CD4-positive, alpha-beta memory T cell (primary cell): ENCODE measurements at regions of chr9 and their contacts with region 1.

Region 1: GRCh38 chr9:131739980-131740648 is at the start of gene RAPGEF1:
- DNase-seq: peak; percentile 66 to 89 (median 81)
- H3K4me3 ChIP-seq: peak within 1 kb of the TSS; percentile 31 to 67
- H3K4me3 Mint-ChIP-seq: peak within 1 kb of the TSS; percentile 92 to 98 (median 94)
- H3K27ac ChIP-seq: peak within 1 kb of the TSS; percentile 72
- H3K27ac Mint-ChIP-seq: peak within 1 kb of the TSS; percentile 91 to 98 (median 95)
- H3K4me1 ChIP-seq: peaks cover 68% of the 10 kb centered on the region
- H3K4me1 Mint-ChIP-seq: peaks cover 46 to 64% (median 55%) of the 10 kb centered on the region in 4 donors
- H3K27me3 ChIP-seq: no peaks in the 10 kb centered on the region
- H3K27me3 Mint-ChIP-seq: no peaks in the 10 kb centered on the region
- total RNA-seq, gene RAPGEF1: 129 to 149 TPM

Region 2: GRCh38 chr9:131253891-131254491 is 486.1 kb before region 1 on chr9:
- CTCF ChIA-PET with region 1: no interaction called
- POLR2A ChIA-PET with region 1: no interaction called
- intact Hi-C with region 1: loop called (anchors 10 kb)
- DNase-seq: no peak
- H3K4me3 ChIP-seq: no peak overlapping the region
- H3K4me3 Mint-ChIP-seq: peak overlapping the region in 7 of 8 donors; percentile 27 to 91 (median 46)
- H3K27ac ChIP-seq: peak overlapping the region; percentile 77
- H3K27ac Mint-ChIP-seq: peak overlapping the region; percentile 57 to 100 (median 72)
- H3K4me1 ChIP-seq: peaks cover 72% of the 10 kb centered on the region
- H3K4me1 Mint-ChIP-seq: peaks cover 27 to 73% (median 50%) of the 10 kb centered on the region in 4 donors
- H3K27me3 ChIP-seq: no peaks in the 10 kb centered on the region
- H3K27me3 Mint-ChIP-seq: no peaks in the 10 kb centered on the region

Region 3: DNA sequence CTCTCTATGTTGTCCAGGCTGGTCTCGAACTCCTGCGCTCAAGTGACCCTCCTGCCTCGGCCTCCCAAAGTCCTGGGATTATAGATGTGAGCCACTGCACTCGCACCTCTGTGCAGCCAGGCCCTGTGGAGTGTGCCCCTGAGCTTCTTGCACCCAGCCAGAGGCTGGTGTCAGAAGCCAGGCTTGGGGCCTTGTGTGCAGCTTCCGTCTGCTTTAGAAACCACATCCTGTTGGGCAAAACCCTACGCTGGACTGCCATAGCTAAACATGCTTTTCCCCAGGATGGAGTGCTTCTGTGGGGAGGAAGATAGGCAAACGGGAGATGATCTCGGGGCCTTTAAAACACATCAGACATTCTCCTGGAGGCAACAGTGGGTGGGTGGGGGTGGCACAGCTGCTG is 154.7 kb before region 1 on chr9:
- CTCF ChIA-PET with region 1: interaction called, 186 read pairs
- POLR2A ChIA-PET with region 1: interaction called, 26 read pairs
- intact Hi-C with region 1: no loop called
- DNase-seq: peak; percentile 56 to 77 (median 60)
- H3K4me3 ChIP-seq: no peak overlapping the region
- H3K4me3 Mint-ChIP-seq: peak overlapping the region; percentile 67 to 87 (median 78)
- H3K27ac ChIP-seq: peak overlapping the region; percentile 6
- H3K27ac Mint-ChIP-seq: peak overlapping the region; percentile 85 to 97 (median 92)
- H3K4me1 ChIP-seq: peaks cover 35% of the 10 kb centered on the region
- H3K4me1 Mint-ChIP-seq: peaks cover 24 to 57% (median 32%) of the 10 kb centered on the region in 4 donors
- H3K27me3 ChIP-seq: no peaks in the 10 kb centered on the region
- H3K27me3 Mint-ChIP-seq: no peaks in the 10 kb centered on the region

Region 4: DNA sequence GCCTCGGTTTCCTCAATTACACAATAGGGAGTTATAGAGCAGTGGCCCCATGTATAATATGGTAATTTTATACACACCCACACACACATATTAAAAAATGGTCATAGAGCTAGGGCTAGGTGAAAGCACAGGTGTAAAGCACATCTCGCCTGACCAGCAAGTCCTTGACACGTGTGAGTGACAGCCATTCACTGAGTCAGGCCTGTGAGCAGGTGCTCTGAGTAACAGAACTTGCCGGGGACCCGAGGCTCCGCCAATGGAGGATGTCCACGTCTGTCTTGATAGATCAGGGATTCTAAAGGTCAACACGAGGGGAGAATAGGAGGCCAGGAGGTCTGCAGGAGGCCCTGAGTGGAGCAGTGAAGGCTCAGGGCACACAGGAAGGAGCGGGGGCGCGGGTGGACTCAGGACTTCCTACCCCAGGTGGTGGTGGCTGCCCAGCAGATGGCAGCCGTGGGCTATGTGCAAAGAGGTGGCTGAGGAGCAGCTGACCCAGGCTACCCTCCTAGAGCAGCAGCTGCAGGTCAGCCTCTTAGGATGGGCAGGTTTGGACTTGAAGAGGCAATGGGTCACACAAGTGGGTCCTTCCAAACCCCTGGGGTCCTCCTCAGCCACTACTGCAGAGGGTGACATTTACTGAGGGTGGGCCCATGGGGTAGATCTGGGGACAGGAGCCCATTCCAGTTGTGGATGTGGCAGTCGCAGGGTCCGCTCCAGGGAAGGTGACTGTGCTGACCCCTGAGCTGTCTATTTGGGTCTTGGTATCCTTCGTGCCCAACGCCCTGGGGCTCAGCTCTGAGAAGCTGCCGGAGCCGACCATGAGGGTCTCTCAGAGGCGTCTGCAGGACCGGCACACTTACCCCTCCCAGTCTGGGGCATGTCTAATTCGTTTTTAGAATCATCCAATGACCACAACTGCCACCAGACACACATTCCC is 148.9 kb before region 1 on chr9:
- CTCF ChIA-PET with region 1: interaction called, 186 read pairs
- POLR2A ChIA-PET with region 1: interaction called, 26 read pairs
- intact Hi-C with region 1: loop called (anchors 1 kb)
- DNase-seq: peak; percentile 68 to 74 (median 73)
- H3K4me3 ChIP-seq: no peak overlapping the region
- H3K4me3 Mint-ChIP-seq: peak overlapping the region in 6 of 8 donors; percentile 20 to 73 (median 46)
- H3K27ac ChIP-seq: no peak overlapping the region
- H3K27ac Mint-ChIP-seq: peak overlapping the region; percentile 77 to 94 (median 85)
- H3K4me1 ChIP-seq: peaks cover 25% of the 10 kb centered on the region
- H3K4me1 Mint-ChIP-seq: peaks cover 22 to 48% (median 34%) of the 10 kb centered on the region in 4 donors
- H3K27me3 ChIP-seq: no peaks in the 10 kb centered on the region
- H3K27me3 Mint-ChIP-seq: no peaks in the 10 kb centered on the region

Region 5: GRCh38 chr9:131598121-131598520 is 142.0 kb before region 1 on chr9:
- CTCF ChIA-PET with region 1: interaction called, 186 read pairs
- POLR2A ChIA-PET with region 1: interaction called, 26 read pairs
- intact Hi-C with region 1: no loop called
- DNase-seq: no peak
- H3K4me3 ChIP-seq: no peak overlapping the region
- H3K4me3 Mint-ChIP-seq: no peak overlapping the region
- H3K27ac ChIP-seq: no peak overlapping the region
- H3K27ac Mint-ChIP-seq: peak overlapping the region in 3 of 7 donors; percentile 13 to 88 (median 31)
- H3K4me1 ChIP-seq: no peaks in the 10 kb centered on the region
- H3K4me1 Mint-ChIP-seq: peaks cover 0 to 7% (median 2%) of the 10 kb centered on the region in 4 donors
- H3K27me3 ChIP-seq: no peaks in the 10 kb centered on the region
- H3K27me3 Mint-ChIP-seq: no peaks in the 10 kb centered on the region

Region 6: DNA sequence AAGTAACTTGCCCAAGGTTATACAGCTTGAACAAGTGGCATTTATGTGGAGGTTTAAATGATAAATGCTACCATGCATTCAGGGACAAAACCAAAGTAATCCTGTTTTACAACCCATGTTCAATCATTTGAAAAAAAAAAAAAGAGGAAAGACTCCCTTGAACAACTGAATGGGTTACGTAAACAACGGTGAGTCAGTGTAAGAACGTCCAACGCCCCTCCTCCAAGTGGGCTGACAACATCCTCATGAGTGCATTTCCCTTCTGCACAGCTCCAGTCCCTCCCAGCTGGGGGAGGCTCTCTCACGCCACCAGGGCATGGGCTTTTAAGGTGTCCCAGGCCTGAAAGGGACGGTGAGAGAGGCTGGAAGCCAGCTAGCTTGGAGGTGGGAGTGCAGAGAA is 104.8 kb before region 1 on chr9:
- CTCF ChIA-PET with region 1: interaction called, 16 read pairs
- POLR2A ChIA-PET with region 1: interaction called, 9 read pairs
- intact Hi-C with region 1: no loop called
- DNase-seq: peak; percentile 74 to 94 (median 80)
- H3K4me3 ChIP-seq: no peak overlapping the region
- H3K4me3 Mint-ChIP-seq: peak overlapping the region in 5 of 8 donors; percentile 13 to 60 (median 26)
- H3K27ac ChIP-seq: peak overlapping the region; percentile 67
- H3K27ac Mint-ChIP-seq: peak overlapping the region; percentile 92 to 97 (median 96)
- H3K4me1 ChIP-seq: peaks cover 20% of the 10 kb centered on the region
- H3K4me1 Mint-ChIP-seq: peaks cover 23 to 50% (median 38%) of the 10 kb centered on the region in 4 donors
- H3K27me3 ChIP-seq: no peaks in the 10 kb centered on the region
- H3K27me3 Mint-ChIP-seq: no peaks in the 10 kb centered on the region

Region 7: DNA sequence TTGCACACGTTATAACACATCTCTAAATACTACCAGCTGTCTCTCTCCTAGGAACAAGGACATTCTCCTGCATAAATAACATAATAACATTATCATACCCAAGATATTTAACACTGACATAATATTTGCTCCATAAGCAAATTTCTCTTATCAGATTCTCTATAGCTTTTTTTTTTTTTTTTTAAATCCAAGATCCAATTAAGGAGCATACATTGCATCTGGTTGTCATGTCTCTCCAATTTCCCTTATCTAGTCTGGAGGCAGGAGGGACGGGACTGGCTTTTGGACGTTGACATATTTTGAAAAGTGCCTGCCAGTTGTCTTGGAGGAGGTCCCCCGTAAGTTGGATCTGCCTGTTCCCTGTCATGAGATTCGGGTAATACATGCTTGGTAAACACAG is 76.8 kb before region 1 on chr9:
- CTCF ChIA-PET with region 1: interaction called, 11 read pairs
- POLR2A ChIA-PET with region 1: interaction called, 692 read pairs
- intact Hi-C with region 1: no loop called
- DNase-seq: no peak
- H3K4me3 ChIP-seq: no peak overlapping the region
- H3K4me3 Mint-ChIP-seq: peak overlapping the region in 7 of 8 donors; percentile 9 to 61 (median 31)
- H3K27ac ChIP-seq: no peak overlapping the region
- H3K27ac Mint-ChIP-seq: peak overlapping the region; percentile 64 to 94 (median 89)
- H3K4me1 ChIP-seq: peaks cover 94% of the 10 kb centered on the region
- H3K4me1 Mint-ChIP-seq: peaks cover 56 to 94% (median 75%) of the 10 kb centered on the region in 4 donors
- H3K27me3 ChIP-seq: no peaks in the 10 kb centered on the region
- H3K27me3 Mint-ChIP-seq: no peaks in the 10 kb centered on the region